ENCODE measurements at regions of chr13 and their contacts with region 1.

Region 1: GRCh38 chr13:71879129-71879535 is 12.1 kb upstream of the DACH1 start:
- DNase-seq: no peak
- ATAC-seq: peak in 1 of 2 donors; percentile 52
- H3K4me3 ChIP-seq: peak overlapping the region in 1 of 4 donors; percentile 15
- H3K27ac ChIP-seq: peak overlapping the region in 1 of 4 donors; percentile 28
- H3K4me1 ChIP-seq: peaks cover 0 to 5% of the 10 kb centered on the region in 2 donors
- H3K27me3 ChIP-seq: no peaks in the 10 kb centered on the region
- CTCF ChIP-seq: peak in 4 of 5 experiments; percentile 17 to 53 (median 32)
- POLR2A ChIP-seq: no peak

Region 2: DNA sequence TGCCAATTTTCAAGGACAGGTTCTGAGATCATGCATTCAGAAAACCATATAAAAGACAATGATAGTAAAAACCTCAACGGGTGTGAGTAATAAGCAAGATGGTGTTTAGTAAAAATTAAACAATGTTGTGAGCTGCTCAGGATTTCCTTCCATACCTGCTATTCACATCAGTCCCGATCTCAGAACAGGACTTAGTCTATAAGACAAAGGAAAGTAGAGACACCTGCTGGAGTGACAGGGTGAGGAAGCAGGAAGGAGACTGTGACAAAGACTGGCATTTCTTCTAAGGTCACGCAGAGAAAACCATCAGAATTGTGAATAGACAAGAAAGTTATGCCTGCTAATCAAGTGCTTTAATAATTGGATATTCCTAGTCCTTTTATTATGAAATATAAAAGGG is 660.2 kb before region 1 on chr13:
- in situ Hi-C with region 1: no loop called
- intact Hi-C with region 1: no loop called
- DNase-seq: no peak
- ATAC-seq: no peak
- H3K4me3 ChIP-seq: no peak overlapping the region
- H3K27ac ChIP-seq: no peak overlapping the region
- H3K4me1 ChIP-seq: no peaks in the 10 kb centered on the region
- H3K27me3 ChIP-seq: no peaks in the 10 kb centered on the region
- CTCF ChIP-seq: no peak
- POLR2A ChIP-seq: no peak

Region 3: GRCh38 chr13:71290963-71291841 is 587.9 kb before region 1 on chr13:
- in situ Hi-C with region 1: loop called in 2 of 4 experiments (anchors 25 kb)
- intact Hi-C with region 1: no loop called
- DNase-seq: peak; percentile 8 to 29
- ATAC-seq: peak; percentile 56 to 67
- H3K4me3 ChIP-seq: peak overlapping the region; percentile 37 to 62 (median 59)
- H3K27ac ChIP-seq: peak overlapping the region; percentile 33 to 69 (median 58)
- H3K4me1 ChIP-seq: no peaks in the 10 kb centered on the region
- H3K27me3 ChIP-seq: no peaks in the 10 kb centered on the region
- CTCF ChIP-seq: no peak
- POLR2A ChIP-seq: no peak

Region 4: DNA sequence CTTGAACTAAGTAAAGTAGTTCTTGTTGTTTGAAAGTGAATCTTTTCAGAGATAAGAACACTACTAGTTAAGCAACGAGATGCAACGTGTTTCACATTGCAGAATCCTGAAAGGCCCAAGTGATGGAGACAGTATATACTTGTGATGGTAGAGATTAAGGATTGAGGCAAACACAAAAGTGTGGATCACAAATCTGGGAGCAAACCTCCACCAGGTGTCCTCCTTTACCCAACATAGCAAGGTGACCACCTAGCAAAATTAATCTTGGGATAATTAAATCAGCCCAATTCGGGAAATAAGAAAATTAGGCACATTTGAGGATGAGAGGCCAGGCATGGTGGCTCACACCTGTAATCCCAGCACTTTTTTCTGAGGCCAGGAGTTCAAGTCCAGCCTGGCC is 576.0 kb before region 1 on chr13:
- in situ Hi-C with region 1: loop called in 2 of 4 experiments (anchors 25 kb)
- intact Hi-C with region 1: loop called (anchors 10 kb)
- DNase-seq: no peak
- ATAC-seq: no peak
- H3K4me3 ChIP-seq: no peak overlapping the region
- H3K27ac ChIP-seq: no peak overlapping the region
- H3K4me1 ChIP-seq: no peaks in the 10 kb centered on the region
- H3K27me3 ChIP-seq: no peaks in the 10 kb centered on the region
- CTCF ChIP-seq: no peak
- POLR2A ChIP-seq: no peak

Region 5: GRCh38 chr13:71517004-71517403 is 362.1 kb before region 1 on chr13:
- in situ Hi-C with region 1: no loop called
- intact Hi-C with region 1: no loop called
- DNase-seq: no peak
- ATAC-seq: no peak
- H3K4me3 ChIP-seq: no peak overlapping the region
- H3K27ac ChIP-seq: no peak overlapping the region
- H3K4me1 ChIP-seq: no peaks in the 10 kb centered on the region
- H3K27me3 ChIP-seq: no peaks in the 10 kb centered on the region
- CTCF ChIP-seq: no peak
- POLR2A ChIP-seq: no peak

Measured in gastrocnemius medialis (tissue), 4 donors.